ENCODE measurements at regions of chr11 and their contacts with region 1.

Region 1: GRCh38 chr11:120952461-120953434 is 71.2 kb upstream of the TBCEL start:
- DNase-seq: peak; percentile 92
- H3K4me3 ChIP-seq: peak overlapping the region; percentile 4
- H3K27ac ChIP-seq: no peak overlapping the region
- H3K4me1 ChIP-seq: no peaks in the 10 kb centered on the region
- H3K27me3 ChIP-seq: peaks cover 37% of the 10 kb centered on the region
- CTCF ChIP-seq: peak; percentile 93

Region 2: GRCh38 chr11:120682866-120683265 is 269.9 kb before region 1 on chr11:
- CTCF ChIA-PET with region 1: interaction called, 4 read pairs
- POLR2A ChIA-PET with region 1: interaction called, 15 read pairs
- intact Hi-C with region 1: no loop called
- DNase-seq: no peak
- H3K4me3 ChIP-seq: no peak overlapping the region
- H3K27ac ChIP-seq: no peak overlapping the region
- H3K4me1 ChIP-seq: no peaks in the 10 kb centered on the region
- H3K27me3 ChIP-seq: peaks cover 35% of the 10 kb centered on the region
- CTCF ChIP-seq: no peak

Region 3: GRCh38 chr11:120964857-120965256 is 12.1 kb after region 1 on chr11:
- CTCF ChIA-PET with region 1: interaction called, 13 read pairs
- POLR2A ChIA-PET with region 1: no interaction called
- intact Hi-C with region 1: no loop called
- DNase-seq: no peak
- H3K4me3 ChIP-seq: no peak overlapping the region
- H3K27ac ChIP-seq: no peak overlapping the region
- H3K4me1 ChIP-seq: no peaks in the 10 kb centered on the region
- H3K27me3 ChIP-seq: peaks cover 22% of the 10 kb centered on the region
- CTCF ChIP-seq: no peak

Region 4: DNA sequence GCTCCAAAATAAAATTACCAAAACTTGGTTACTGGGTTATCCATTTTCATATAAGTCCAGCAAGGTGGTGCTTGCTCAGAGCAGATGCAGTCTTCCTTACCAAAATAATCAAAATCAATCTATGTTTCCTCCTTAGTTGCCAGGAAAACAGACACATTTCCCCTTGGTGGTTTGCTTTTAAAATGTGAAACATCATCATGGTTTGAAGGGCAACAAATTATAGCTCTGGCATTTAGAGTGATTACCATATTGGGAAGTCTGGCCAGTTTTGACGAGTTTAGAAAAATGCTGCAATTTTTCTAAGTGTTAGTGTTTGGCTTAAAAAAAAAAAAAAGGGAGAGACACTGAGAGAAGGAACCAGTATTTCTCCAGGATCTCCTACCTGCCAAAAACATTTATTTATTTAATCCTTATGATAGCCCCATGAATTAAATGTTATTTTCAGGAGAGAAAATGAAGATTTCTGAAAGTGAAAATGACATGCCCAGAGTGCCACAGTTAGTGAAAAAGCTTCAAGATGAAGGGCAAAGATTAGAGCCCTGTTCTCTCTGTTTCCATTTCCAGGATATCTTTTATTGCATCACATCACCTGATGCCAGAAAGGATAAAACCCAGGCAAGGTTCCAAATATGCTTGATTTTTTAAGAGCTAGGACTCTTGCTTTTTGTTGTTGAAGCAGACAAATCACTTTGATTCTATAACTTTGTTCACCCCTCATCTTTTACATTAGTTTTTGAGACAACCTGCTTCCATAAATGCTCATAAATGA is 41.5 kb after region 1 on chr11:
- CTCF ChIA-PET with region 1: interaction called, 10 read pairs
- POLR2A ChIA-PET with region 1: no interaction called
- intact Hi-C with region 1: no loop called
- DNase-seq: no peak
- H3K4me3 ChIP-seq: no peak overlapping the region
- H3K27ac ChIP-seq: no peak overlapping the region
- H3K4me1 ChIP-seq: no peaks in the 10 kb centered on the region
- H3K27me3 ChIP-seq: peaks cover 66% of the 10 kb centered on the region
- CTCF ChIP-seq: no peak